ENCODE measurements at regions of chr11 and their contacts with region 1.

Region 1: GRCh38 chr11:10540923-10541560 is at the start of gene RNF141:
- DNase-seq: peak; percentile 99
- total RNA-seq, gene RNF141: 24.7 to 25.3 TPM

Region 2: DNA sequence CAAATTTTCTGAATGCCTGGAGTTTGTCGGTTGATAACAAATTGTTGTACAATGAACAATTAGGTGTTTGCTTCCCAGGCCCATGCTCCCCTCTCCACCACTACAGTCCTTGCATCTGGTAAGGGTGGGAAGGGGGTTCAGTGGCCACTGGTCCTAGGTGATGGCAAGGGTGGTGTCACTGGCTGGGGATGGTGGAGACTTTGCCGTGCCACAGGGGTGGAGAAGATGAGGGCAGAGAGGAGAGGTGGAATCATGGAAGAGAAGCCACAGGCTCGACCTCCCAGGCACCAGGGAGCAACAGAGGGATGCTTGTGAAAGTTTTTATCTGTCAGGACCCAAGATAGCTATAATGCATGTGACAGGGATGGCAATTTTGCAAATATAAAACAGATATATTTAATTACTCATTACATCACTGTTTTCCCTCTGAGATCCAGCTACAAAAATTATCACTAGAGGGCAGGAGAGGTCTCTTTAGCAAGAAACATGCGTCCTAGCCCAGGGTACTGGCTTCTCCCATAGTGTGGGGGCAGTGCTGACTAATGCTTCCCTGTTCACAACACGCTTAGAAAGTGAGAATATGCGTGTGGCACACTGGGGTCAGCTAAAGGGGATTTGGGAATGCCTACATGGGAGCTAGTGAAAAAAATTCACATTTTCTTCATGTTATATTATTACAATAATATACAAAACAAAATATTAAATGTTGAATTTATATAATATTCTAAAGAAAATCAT is 135.0 kb before region 1 on chr11:
- intact Hi-C with region 1: loop called in 1 of 2 experiments (anchors 10 kb)
- DNase-seq: peak; percentile 85

Region 3: DNA sequence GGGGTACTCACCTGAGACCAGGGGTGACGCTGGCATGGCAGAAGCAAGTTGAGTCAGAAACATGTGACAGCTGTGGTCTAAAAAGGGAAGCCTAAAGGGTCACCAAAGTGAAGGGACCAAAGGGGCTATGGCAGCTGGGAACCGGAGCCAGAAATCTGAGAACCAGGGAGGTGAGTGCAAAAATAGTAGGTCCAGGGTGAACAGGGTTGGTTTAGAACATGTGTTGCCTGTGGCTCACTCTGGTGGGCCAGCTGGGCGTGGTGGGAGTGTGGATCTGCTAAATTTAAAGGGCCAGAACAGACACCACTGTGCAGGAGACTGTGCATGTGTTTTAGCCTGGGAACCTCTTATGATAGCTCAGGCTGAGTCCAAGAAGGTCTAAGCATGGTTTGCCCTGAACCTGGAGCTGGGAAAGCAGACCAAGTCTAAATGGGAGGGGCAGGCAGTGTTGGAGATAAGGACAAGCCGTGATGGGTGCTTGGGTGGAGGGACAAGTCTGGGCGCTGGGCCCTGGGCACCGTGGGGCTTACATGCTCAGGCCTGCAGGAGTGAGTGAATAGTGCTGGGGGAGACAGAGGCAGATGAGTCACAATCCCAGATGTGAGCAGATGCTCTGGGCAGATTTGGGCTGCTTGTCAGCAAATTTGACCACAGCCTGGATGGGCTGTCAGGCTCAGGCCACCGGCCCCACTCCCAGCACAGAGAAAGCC is 358.2 kb after region 1 on chr11:
- intact Hi-C with region 1: no loop called
- DNase-seq: no peak